Psoas muscle (tissue), 8 donors: ENCODE measurements at regions of chr20 and their contacts with region 1.

Region 1: GRCh38 chr20:38152621-38153231 is 12.3 kb downstream of the TGM2 start:
- DNase-seq: peak; percentile 84 to 87
- ATAC-seq: peak in 3 of 4 donors; percentile 18 to 39 (median 32)
- H3K4me3 ChIP-seq: no peak overlapping the region
- H3K27ac ChIP-seq: peak overlapping the region; percentile 66
- H3K4me1 ChIP-seq: peaks cover 22% of the 10 kb centered on the region
- H3K27me3 ChIP-seq: no peaks in the 10 kb centered on the region
- CTCF ChIP-seq: no peak

Region 2: GRCh38 chr20:38084400-38084951 is 68.2 kb before region 1 on chr20:
- intact Hi-C with region 1: no loop called
- DNase-seq: no peak
- ATAC-seq: no peak
- H3K4me3 ChIP-seq: no peak overlapping the region
- H3K27ac ChIP-seq: no peak overlapping the region
- H3K4me1 ChIP-seq: peaks cover 17% of the 10 kb centered on the region
- H3K27me3 ChIP-seq: no peaks in the 10 kb centered on the region
- CTCF ChIP-seq: no peak

Region 3: GRCh38 chr20:38132555-38133501 is 19.9 kb before region 1 on chr20:
- intact Hi-C with region 1: loop called in 1 of 2 experiments (anchors 1 kb)
- DNase-seq: peak in 1 of 2 donors; percentile 34
- ATAC-seq: no peak
- H3K4me3 ChIP-seq: no peak overlapping the region
- H3K27ac ChIP-seq: no peak overlapping the region
- H3K4me1 ChIP-seq: no peaks in the 10 kb centered on the region
- H3K27me3 ChIP-seq: no peaks in the 10 kb centered on the region
- CTCF ChIP-seq: no peak